Calu3 (cell line): ENCODE measurements at regions of chr3 and their contacts with region 1.

Region 1: DNA sequence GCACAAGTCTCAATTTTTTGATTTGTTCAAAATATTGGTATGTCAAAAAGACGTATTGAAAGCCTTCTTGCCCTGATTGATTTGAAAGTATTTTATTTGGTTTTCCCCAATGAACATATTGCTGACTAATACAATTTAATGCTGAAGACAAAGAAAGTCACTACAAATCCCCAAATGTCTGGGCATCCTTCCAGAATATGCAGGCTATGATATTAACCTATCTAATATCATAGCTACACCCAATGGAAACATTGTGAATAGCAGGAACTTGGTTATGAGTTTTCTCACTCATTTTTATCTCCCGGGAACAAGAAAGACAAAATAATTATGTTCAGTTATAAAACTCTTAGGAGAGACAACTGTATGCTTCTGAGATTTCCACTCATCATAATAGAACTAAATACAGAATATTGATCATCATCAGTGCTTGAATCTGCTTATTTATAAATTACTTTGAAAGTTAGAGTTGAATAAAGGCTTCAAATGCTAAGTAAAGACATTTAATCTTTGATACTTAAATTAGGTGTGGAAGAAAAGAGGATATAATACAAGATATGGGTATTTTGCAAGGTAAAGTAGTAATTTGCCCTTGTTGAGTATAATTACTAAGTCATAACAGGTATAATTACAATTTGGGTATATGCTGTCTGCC is 483.9 kb downstream of the RBMS3 start:
- DNase-seq: peak; percentile 23
- H3K4me3 Mint-ChIP-seq: no peak overlapping the region
- H3K27ac Mint-ChIP-seq: no peak overlapping the region
- H3K4me1 Mint-ChIP-seq: peaks cover 17% of the 10 kb centered on the region
- H3K27me3 Mint-ChIP-seq: no peaks in the 10 kb centered on the region
- CTCF ChIP-seq: no peak

Region 2: GRCh38 chr3:28476194-28476593 is 1288.5 kb before region 1 on chr3:
- CTCF ChIA-PET with region 1: no interaction called
- intact Hi-C with region 1: loop called (anchors 5 kb)
- DNase-seq: no peak
- H3K4me3 Mint-ChIP-seq: no peak overlapping the region
- H3K27ac Mint-ChIP-seq: no peak overlapping the region
- H3K4me1 Mint-ChIP-seq: no peaks in the 10 kb centered on the region
- H3K27me3 Mint-ChIP-seq: no peaks in the 10 kb centered on the region
- CTCF ChIP-seq: peak; percentile 31

Region 3: GRCh38 chr3:28853830-28854229 is 910.9 kb before region 1 on chr3:
- CTCF ChIA-PET with region 1: no interaction called
- intact Hi-C with region 1: loop called (anchors 2 kb)
- DNase-seq: no peak
- H3K4me3 Mint-ChIP-seq: no peak overlapping the region
- H3K27ac Mint-ChIP-seq: no peak overlapping the region
- H3K4me1 Mint-ChIP-seq: no peaks in the 10 kb centered on the region
- H3K27me3 Mint-ChIP-seq: no peaks in the 10 kb centered on the region
- CTCF ChIP-seq: no peak

Region 4: GRCh38 chr3:29065211-29065785 is 699.4 kb before region 1 on chr3:
- CTCF ChIA-PET with region 1: no interaction called
- intact Hi-C with region 1: loop called (anchors 10 kb)
- DNase-seq: peak; percentile 83
- H3K4me3 Mint-ChIP-seq: no peak overlapping the region
- H3K27ac Mint-ChIP-seq: peak overlapping the region; percentile 16
- H3K4me1 Mint-ChIP-seq: peaks cover 8% of the 10 kb centered on the region
- H3K27me3 Mint-ChIP-seq: no peaks in the 10 kb centered on the region
- CTCF ChIP-seq: no peak

Region 5: GRCh38 chr3:29453284-29454001 is 311.3 kb before region 1 on chr3:
- CTCF ChIA-PET with region 1: no interaction called
- intact Hi-C with region 1: loop called (anchors 10 kb)
- DNase-seq: peak; percentile 54
- H3K4me3 Mint-ChIP-seq: no peak overlapping the region
- H3K27ac Mint-ChIP-seq: no peak overlapping the region
- H3K4me1 Mint-ChIP-seq: peaks cover 25% of the 10 kb centered on the region
- H3K27me3 Mint-ChIP-seq: no peaks in the 10 kb centered on the region
- CTCF ChIP-seq: no peak

Region 6: DNA sequence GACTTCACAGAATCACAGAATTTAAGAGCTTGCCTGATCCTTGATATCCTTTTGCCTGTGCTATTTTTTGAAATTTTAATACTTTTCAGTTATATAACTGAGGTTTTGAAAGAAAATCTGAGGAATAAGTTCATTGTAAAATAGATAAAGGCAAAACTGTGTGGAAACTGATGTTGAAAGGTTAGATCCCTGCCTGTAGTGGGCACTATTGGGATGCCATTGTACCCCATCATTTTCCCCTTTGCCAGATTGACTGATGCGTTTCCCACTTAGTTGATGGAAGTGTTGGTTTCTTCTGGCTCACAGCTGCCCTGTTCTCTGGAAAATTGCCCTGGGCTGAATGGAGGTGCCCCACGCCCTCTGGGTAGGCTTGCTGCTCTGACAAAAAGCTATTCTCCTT is 96.0 kb before region 1 on chr3:
- CTCF ChIA-PET with region 1: no interaction called
- intact Hi-C with region 1: no loop called
- DNase-seq: no peak
- H3K4me3 Mint-ChIP-seq: no peak overlapping the region
- H3K27ac Mint-ChIP-seq: peak overlapping the region; percentile 44
- H3K4me1 Mint-ChIP-seq: peaks cover 23% of the 10 kb centered on the region
- H3K27me3 Mint-ChIP-seq: no peaks in the 10 kb centered on the region
- CTCF ChIP-seq: no peak

Region 7: DNA sequence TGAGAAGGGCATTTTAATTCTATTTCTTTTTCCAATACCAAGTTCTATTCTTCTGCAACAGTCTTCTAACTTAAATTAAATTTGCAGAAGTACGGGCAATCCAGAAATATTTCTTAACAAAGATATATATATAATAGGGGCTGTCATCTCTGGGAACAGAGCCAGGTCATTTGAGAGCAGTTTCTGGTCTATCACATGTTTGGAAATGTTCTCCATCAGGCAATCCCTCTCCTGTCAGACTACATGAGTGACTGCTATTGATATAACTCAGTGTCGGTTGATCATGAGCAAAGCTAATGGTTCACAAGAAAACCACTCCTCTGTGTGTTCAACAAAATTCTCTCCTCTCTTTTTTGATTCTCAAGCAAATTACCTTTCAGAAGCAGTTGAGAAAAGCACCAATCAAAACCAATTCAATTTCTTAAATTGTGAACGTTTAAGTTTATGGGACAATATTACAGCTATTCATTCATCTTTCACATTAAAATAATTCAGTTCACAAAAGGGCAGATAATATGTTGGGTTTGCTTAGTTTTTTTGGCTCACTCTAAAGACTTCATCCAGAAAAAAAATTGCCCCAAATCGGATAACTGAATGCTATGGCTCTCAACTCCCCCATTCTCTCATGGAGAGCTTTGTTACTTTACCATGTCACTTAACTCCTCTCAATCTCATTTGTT is 688.8 kb after region 1 on chr3:
- CTCF ChIA-PET with region 1: no interaction called
- intact Hi-C with region 1: no loop called
- DNase-seq: no peak
- H3K4me3 Mint-ChIP-seq: no peak overlapping the region
- H3K27ac Mint-ChIP-seq: no peak overlapping the region
- H3K4me1 Mint-ChIP-seq: no peaks in the 10 kb centered on the region
- H3K27me3 Mint-ChIP-seq: no peaks in the 10 kb centered on the region
- CTCF ChIP-seq: no peak